ENCODE measurements at regions of chr15 and their contacts with region 1.

Region 1: GRCh38 chr15:90780916-90781315 is 63.8 kb downstream of the BLM start:
- DNase-seq: no peak
- ATAC-seq: no peak
- H3K4me3 ChIP-seq: no peak overlapping the region
- H3K27ac ChIP-seq: no peak overlapping the region
- H3K4me1 ChIP-seq: no peaks in the 10 kb centered on the region
- H3K27me3 ChIP-seq: no peaks in the 10 kb centered on the region
- CTCF ChIP-seq: no peak
- POLR2A ChIP-seq: no peak

Region 2: DNA sequence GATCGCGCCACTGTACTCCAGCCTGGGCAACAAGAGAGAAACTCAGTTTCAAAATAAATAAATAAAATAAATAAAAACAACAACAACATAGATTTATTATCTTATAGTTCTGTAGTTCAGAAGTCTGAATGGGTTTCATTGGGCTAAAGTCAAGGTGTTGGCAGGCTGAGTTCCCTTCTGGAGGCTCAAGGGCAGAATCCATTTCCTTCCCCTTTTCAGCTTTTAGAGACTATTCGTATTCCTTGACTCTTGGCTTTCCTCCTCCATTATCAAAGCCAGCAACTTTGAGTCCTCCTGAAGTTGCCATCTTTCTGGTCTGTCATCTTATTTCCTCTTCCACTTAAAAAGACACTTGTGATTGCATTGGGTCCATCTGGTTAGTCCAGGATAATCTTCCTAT is 51.7 kb before region 1 on chr15:
- intact Hi-C with region 1: loop called in 1 of 2 experiments (anchors 10 kb)
- DNase-seq: no peak
- ATAC-seq: no peak
- H3K4me3 ChIP-seq: no peak overlapping the region
- H3K27ac ChIP-seq: no peak overlapping the region
- H3K4me1 ChIP-seq: no peaks in the 10 kb centered on the region
- H3K27me3 ChIP-seq: no peaks in the 10 kb centered on the region
- CTCF ChIP-seq: no peak
- POLR2A ChIP-seq: no peak